HCT116 (cell line): ENCODE measurements at regions of chr18 and their contacts with region 1.

Region 1: DNA sequence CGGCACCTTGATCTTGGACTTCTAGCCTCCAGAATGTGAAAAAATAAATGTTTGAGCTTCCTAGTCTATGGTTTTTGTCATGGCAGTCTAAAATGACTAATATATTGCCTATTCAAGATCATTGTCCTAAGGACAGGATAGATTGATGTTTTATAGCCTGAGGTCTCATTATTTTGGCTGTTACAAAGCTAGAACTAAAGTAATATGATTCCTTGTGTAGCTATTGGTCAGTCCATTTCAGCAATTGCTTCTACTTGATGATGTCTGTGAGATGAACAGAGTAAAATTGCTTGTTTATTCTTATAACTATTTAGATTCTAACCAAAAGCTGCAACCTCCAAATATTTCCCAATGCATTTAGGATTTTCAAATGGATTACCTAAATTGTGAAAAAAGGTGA is 145.0 kb downstream of the HRH4 start:
- DNase-seq: no peak
- ATAC-seq: no peak
- H3K4me3 ChIP-seq: no peak overlapping the region
- H3K27ac ChIP-seq: no peak overlapping the region
- H3K4me1 ChIP-seq: no peaks in the 10 kb centered on the region
- H3K27me3 ChIP-seq: peaks cover 24% of the 10 kb centered on the region
- CTCF ChIP-seq: no peak
- POLR2A ChIP-seq: no peak
- RAD21 ChIP-seq: no peak

Region 2: DNA sequence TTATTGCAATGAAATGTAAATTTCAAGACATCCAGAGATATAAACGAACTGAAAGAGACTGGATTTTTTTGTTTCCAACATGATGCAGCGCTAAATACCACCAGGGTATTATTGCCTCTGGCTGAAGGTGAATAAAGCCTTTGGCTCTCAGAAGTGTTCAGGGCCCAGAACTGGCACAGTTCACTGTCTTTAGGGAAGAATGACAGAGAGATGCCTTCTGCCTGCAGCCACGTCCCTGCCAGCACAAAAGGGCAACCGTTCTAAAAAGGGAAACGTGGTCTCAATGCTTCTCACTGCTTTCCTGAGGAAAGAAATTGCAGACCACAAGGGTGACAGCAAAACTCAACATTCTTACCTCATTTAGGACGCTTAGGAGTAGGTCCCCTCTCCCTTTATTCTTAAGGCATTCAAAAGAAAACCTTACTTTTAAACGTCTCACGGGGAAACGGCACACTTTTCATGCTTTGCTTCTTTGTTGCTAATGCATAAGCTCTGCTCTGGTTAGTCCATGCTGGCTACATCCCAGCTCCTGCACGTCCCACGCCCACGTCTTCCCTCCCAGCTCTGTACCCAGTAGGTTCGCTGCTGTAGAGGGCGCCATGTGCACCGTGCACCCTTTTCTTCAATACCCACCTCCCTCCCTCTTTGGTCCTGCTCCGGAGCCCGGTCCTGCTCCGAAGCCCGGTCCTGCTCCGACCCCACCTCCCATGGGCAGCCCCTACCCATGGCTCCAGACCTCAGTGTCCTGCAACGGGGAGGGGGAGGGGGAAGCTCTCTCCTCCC is 26.0 kb after region 1 on chr18:
- CTCF ChIA-PET with region 1: no interaction called
- POLR2A ChIA-PET with region 1: no interaction called
- RAD21 ChIA-PET with region 1: no interaction called
- intact Hi-C with region 1: loop called (anchors 2 kb)
- DNase-seq: no peak
- ATAC-seq: 0 out of 2 replicates have a peak, but pooled peaks have one; percentile 42
- H3K4me3 ChIP-seq: no peak overlapping the region
- H3K27ac ChIP-seq: no peak overlapping the region
- H3K4me1 ChIP-seq: no peaks in the 10 kb centered on the region
- H3K27me3 ChIP-seq: peaks cover 20% of the 10 kb centered on the region
- CTCF ChIP-seq: no peak
- POLR2A ChIP-seq: no peak
- RAD21 ChIP-seq: no peak

Region 3: GRCh38 chr18:24786027-24786426 is 180.6 kb after region 1 on chr18:
- CTCF ChIA-PET with region 1: no interaction called
- POLR2A ChIA-PET with region 1: no interaction called
- RAD21 ChIA-PET with region 1: no interaction called
- intact Hi-C with region 1: no loop called
- DNase-seq: no peak
- ATAC-seq: no peak
- H3K4me3 ChIP-seq: no peak overlapping the region
- H3K27ac ChIP-seq: no peak overlapping the region
- H3K4me1 ChIP-seq: no peaks in the 10 kb centered on the region
- H3K27me3 ChIP-seq: peaks cover 22% of the 10 kb centered on the region
- CTCF ChIP-seq: no peak
- POLR2A ChIP-seq: no peak
- RAD21 ChIP-seq: no peak

Region 4: DNA sequence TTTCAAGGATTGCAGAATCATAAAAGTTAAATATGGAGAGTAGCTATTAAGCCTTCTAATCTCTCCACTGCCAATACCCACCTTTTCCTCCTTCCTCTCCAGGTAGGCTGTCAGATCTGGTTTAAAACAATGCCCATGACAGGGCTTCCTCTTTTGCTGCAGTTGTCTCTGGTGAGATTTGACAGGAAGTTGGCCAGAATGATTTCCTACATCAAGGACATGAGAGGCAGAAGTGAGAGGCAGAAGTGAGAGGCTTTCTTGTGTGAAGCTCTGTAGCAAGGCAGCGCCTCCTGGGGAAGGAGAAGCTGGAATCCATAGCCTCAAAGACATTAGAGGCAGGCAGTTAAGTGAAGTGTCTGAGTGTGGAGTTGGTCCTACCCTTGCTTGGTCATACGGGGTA is 240.7 kb after region 1 on chr18:
- CTCF ChIA-PET with region 1: no interaction called
- POLR2A ChIA-PET with region 1: no interaction called
- RAD21 ChIA-PET with region 1: no interaction called
- intact Hi-C with region 1: no loop called
- DNase-seq: no peak
- ATAC-seq: no peak
- H3K4me3 ChIP-seq: no peak overlapping the region
- H3K27ac ChIP-seq: no peak overlapping the region
- H3K4me1 ChIP-seq: no peaks in the 10 kb centered on the region
- H3K27me3 ChIP-seq: peaks cover 13% of the 10 kb centered on the region; the same call in 1 of the 2 replicates
- CTCF ChIP-seq: no peak
- POLR2A ChIP-seq: no peak
- RAD21 ChIP-seq: no peak